ENCODE measurements at regions of chr12 and their contacts with region 1.

Region 1: GRCh38 chr12:42589465-42590329 is at the start of gene PRICKLE1:
- DNase-seq: peak in 1 of 2 experiments; percentile 61
- H3K4me3 ChIP-seq: peak within 1 kb of the TSS; percentile 47
- H3K4me3 Mint-ChIP-seq: peak within 1 kb of the TSS; percentile 74
- H3K27ac Mint-ChIP-seq: no peak within 1 kb of the TSS
- H3K4me1 ChIP-seq: peaks cover 28% of the 10 kb centered on the region
- H3K4me1 Mint-ChIP-seq: peaks cover 26% of the 10 kb centered on the region
- H3K27me3 ChIP-seq: peaks cover 9% of the 10 kb centered on the region
- H3K27me3 Mint-ChIP-seq: peaks cover 4% of the 10 kb centered on the region
- CTCF ChIP-seq: no peak
- total RNA-seq, gene PRICKLE1: 3.8 and 4.5 TPM in 2 replicates

Region 2: GRCh38 chr12:42482445-42483237 is 107.1 kb before region 1 on chr12:
- CTCF ChIA-PET with region 1: interaction called, 3 read pairs
- POLR2A ChIA-PET with region 1: interaction called, 12 read pairs
- intact Hi-C with region 1: loop called (anchors 5 kb)
- DNase-seq: peak; percentile 72 to 90
- H3K4me3 ChIP-seq: peak overlapping the region; percentile 54
- H3K4me3 Mint-ChIP-seq: peak overlapping the region; percentile 92
- H3K27ac Mint-ChIP-seq: no peak overlapping the region
- H3K4me1 ChIP-seq: peaks cover 6% of the 10 kb centered on the region; the same call in 1 of the 2 replicates
- H3K4me1 Mint-ChIP-seq: no peaks in the 10 kb centered on the region
- H3K27me3 ChIP-seq: no peaks in the 10 kb centered on the region
- H3K27me3 Mint-ChIP-seq: no peaks in the 10 kb centered on the region
- CTCF ChIP-seq: peak; percentile 82 to 89

Region 3: GRCh38 chr12:42921741-42922504 is 332.2 kb after region 1 on chr12:
- CTCF ChIA-PET with region 1: no interaction called
- POLR2A ChIA-PET with region 1: no interaction called
- intact Hi-C with region 1: loop called (anchors 1 kb)
- DNase-seq: peak; percentile 83 to 89
- H3K4me3 ChIP-seq: no peak overlapping the region
- H3K4me3 Mint-ChIP-seq: peak overlapping the region; percentile 55
- H3K27ac Mint-ChIP-seq: peak overlapping the region; percentile 91
- H3K4me1 ChIP-seq: peaks cover 41% of the 10 kb centered on the region
- H3K4me1 Mint-ChIP-seq: peaks cover 35% of the 10 kb centered on the region
- H3K27me3 ChIP-seq: no peaks in the 10 kb centered on the region
- H3K27me3 Mint-ChIP-seq: no peaks in the 10 kb centered on the region
- CTCF ChIP-seq: no peak

Region 4: DNA sequence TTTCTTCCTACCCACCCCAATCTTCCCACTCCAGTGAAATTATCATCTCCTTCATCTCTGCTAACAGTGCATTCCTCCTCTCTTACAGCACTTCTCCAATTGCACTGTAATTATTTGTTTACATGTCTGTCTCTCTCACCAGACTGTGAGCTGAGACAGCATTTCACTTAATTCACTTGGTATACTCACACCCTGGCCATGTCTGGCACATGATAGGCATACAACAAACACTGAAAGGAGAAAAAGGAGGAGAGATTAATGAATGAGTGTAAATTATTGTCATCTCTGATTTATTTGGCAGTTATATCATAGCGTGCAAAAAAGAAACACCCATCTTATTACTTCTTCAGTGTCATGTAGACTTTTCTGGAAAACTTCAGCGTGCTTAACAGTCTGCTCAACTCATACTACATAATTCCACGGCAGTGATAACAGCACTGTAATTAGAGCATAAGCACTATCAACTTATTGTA is 510.0 kb after region 1 on chr12:
- CTCF ChIA-PET with region 1: no interaction called
- POLR2A ChIA-PET with region 1: no interaction called
- intact Hi-C with region 1: loop called (anchors 10 kb)
- DNase-seq: no peak
- H3K4me3 ChIP-seq: no peak overlapping the region
- H3K4me3 Mint-ChIP-seq: no peak overlapping the region
- H3K27ac Mint-ChIP-seq: no peak overlapping the region
- H3K4me1 ChIP-seq: no peaks in the 10 kb centered on the region
- H3K4me1 Mint-ChIP-seq: peaks cover 7% of the 10 kb centered on the region
- H3K27me3 ChIP-seq: no peaks in the 10 kb centered on the region
- H3K27me3 Mint-ChIP-seq: no peaks in the 10 kb centered on the region
- CTCF ChIP-seq: no peak

Region 5: DNA sequence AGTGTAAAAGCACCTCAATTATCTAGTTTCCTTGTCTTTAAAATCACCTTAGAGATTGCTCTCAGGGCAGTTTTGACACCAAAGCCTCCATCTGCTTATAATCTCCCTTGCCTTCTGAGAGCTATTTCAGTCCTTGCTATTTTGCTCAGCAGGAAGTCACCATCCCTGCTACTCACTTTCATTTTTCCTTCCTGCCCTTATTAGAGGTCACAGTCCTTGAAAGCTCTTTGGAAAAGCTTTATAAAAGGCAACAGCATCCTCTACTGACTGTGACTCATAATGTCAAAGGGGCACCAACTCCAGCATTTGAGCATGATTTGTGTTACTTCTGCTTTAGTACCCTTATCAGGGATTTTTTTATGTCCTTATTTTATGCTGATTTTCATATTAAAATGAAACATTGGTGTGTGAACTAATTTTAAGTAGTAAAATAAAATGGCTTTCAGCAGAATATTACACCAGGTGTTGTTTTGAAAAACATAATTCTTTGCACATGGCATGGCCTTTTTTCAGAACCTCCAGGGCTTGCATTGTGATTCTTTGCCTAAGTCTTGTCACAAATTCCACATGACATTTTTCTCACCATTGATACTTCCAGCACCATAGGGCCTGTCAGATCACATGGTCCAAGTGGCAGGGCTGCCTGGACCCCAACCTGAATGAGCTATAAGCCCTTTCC is 749.3 kb after region 1 on chr12:
- CTCF ChIA-PET with region 1: no interaction called
- POLR2A ChIA-PET with region 1: no interaction called
- intact Hi-C with region 1: loop called (anchors 1 kb)
- DNase-seq: peak in 1 of 2 experiments; percentile 20
- H3K4me3 ChIP-seq: no peak overlapping the region
- H3K4me3 Mint-ChIP-seq: no peak overlapping the region
- H3K27ac Mint-ChIP-seq: no peak overlapping the region
- H3K4me1 ChIP-seq: no peaks in the 10 kb centered on the region
- H3K4me1 Mint-ChIP-seq: no peaks in the 10 kb centered on the region
- H3K27me3 ChIP-seq: no peaks in the 10 kb centered on the region
- H3K27me3 Mint-ChIP-seq: no peaks in the 10 kb centered on the region
- CTCF ChIP-seq: peak in 1 of 2 experiments; percentile 69